A673 (cell line): ENCODE measurements at regions of chr15 and their contacts with region 1.

Region 1: DNA sequence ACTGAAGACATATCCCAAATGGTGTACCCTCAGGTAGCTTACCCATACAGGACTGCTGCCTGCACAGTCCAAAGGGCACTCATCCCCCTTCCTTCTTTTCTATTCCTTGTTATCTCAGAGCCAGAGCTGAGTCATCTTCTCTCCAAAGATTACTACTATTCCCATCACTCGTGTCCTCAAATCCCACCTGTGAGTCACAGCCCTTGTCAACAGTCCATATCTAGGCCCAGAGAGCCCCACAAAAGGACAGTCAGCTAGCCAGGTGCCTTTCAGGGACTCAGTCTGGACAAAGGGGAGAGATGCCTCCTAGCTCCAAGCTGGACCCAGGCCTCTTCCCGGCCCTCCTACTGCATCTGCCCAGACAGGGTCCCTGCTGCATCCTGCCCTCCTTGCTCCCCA is 11.0 kb downstream of the PARP16 start:
- DNase-seq: no peak
- H3K4me3 ChIP-seq: no peak overlapping the region
- H3K27ac ChIP-seq: no peak overlapping the region
- H3K4me1 ChIP-seq: peaks cover 7% of the 10 kb centered on the region
- H3K27me3 ChIP-seq: no peaks in the 10 kb centered on the region
- CTCF ChIP-seq: no peak

Region 2: DNA sequence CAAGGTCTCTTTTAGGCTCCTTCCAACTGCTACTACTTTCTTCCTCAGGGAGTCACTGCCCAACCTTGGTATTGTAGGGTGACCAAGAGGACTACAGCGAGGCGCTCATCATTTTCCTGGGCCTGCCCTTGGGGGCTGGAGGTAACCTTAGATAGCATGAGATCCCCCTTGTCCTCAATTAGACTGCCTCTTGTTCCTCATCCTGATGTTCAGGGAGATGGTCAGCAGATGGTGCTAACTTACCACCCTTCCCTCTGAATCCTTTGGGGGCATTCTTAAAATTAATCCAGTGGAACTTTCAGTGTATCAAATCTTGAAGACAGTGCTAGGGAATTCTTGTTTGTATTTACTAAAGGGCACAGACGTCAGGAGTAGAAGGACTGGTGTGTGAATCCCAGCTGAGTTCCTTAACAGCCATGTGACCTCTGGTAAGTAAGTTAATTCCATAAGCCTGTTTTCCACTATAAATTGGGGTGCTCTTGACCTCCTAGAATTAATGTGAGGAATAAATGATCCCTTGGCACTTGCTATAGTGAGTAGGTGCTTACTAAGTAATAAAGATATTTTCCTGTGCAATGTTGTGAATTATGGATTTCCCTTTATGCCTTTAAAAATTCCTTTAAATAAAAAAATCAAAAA is 86.5 kb before region 1 on chr15:
- CTCF ChIA-PET with region 1: no interaction called
- POLR2A ChIA-PET with region 1: no interaction called
- intact Hi-C with region 1: loop called (anchors 1 kb)
- DNase-seq: peak; percentile 78
- H3K4me3 ChIP-seq: no peak overlapping the region
- H3K27ac ChIP-seq: no peak overlapping the region
- H3K4me1 ChIP-seq: no peaks in the 10 kb centered on the region
- H3K27me3 ChIP-seq: no peaks in the 10 kb centered on the region
- CTCF ChIP-seq: peak; percentile 73

Region 3: GRCh38 chr15:65245096-65245856 is 30.5 kb before region 1 on chr15:
- CTCF ChIA-PET with region 1: interaction called, 14 read pairs
- POLR2A ChIA-PET with region 1: no interaction called
- intact Hi-C with region 1: no loop called
- DNase-seq: no peak
- H3K4me3 ChIP-seq: no peak overlapping the region
- H3K27ac ChIP-seq: no peak overlapping the region
- H3K4me1 ChIP-seq: no peaks in the 10 kb centered on the region
- H3K27me3 ChIP-seq: no peaks in the 10 kb centered on the region
- CTCF ChIP-seq: no peak